Activated CD8-positive, alpha-beta T cell treated with anti-CD3 and anti-CD28 coated beads for 36 hours (primary cell): ENCODE measurements at regions of chr6 and their contacts with region 1.

Region 1: GRCh38 chr6:35731736-35732532 is 4.9 kb upstream of the ARMC12 start:
- DNase-seq: peak; percentile 98
- ATAC-seq: peak; percentile 60
- H3K4me3 Mint-ChIP-seq: peak overlapping the region; percentile 81
- H3K27ac Mint-ChIP-seq: peak overlapping the region; percentile 94
- H3K4me1 Mint-ChIP-seq: peaks cover 74% of the 10 kb centered on the region
- H3K27me3 Mint-ChIP-seq: no peaks in the 10 kb centered on the region
- CTCF ChIP-seq: no peak

Region 2: DNA sequence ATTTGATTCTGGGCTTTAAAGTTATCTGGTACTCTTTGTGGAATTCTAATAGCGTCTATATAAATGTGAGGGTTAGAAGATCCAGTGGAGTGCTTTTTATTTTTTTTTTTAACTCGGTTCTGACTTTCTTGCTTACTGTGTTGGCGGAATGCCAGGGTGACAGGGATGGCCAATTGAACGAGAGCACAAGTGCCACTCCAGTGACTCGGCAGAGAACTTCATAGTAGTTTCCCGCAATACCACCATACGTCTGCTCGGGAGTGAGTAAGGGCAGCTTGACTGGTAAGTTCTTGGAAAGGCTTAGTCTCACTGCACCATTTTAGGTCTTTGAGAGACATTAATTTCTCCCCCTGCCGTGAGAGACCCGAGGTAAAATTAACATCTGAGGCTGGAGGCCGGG is 169.9 kb before region 1 on chr6:
- CTCF ChIA-PET with region 1: interaction called, 272 read pairs
- POLR2A ChIA-PET with region 1: no interaction called
- intact Hi-C with region 1: no loop called
- DNase-seq: no peak
- ATAC-seq: no peak
- H3K4me3 Mint-ChIP-seq: no peak overlapping the region
- H3K27ac Mint-ChIP-seq: no peak overlapping the region
- H3K4me1 Mint-ChIP-seq: peaks cover 6% of the 10 kb centered on the region
- H3K27me3 Mint-ChIP-seq: no peaks in the 10 kb centered on the region
- CTCF ChIP-seq: no peak

Region 3: GRCh38 chr6:35601331-35602132 is 130.4 kb before region 1 on chr6:
- CTCF ChIA-PET with region 1: interaction called, 236 read pairs
- POLR2A ChIA-PET with region 1: interaction called, 5 read pairs
- intact Hi-C with region 1: no loop called
- DNase-seq: peak; percentile 76
- ATAC-seq: peak; percentile 71
- H3K4me3 Mint-ChIP-seq: peak overlapping the region; percentile 60
- H3K27ac Mint-ChIP-seq: peak overlapping the region; percentile 70
- H3K4me1 Mint-ChIP-seq: peaks cover 70% of the 10 kb centered on the region
- H3K27me3 Mint-ChIP-seq: no peaks in the 10 kb centered on the region
- CTCF ChIP-seq: no peak

Region 4: DNA sequence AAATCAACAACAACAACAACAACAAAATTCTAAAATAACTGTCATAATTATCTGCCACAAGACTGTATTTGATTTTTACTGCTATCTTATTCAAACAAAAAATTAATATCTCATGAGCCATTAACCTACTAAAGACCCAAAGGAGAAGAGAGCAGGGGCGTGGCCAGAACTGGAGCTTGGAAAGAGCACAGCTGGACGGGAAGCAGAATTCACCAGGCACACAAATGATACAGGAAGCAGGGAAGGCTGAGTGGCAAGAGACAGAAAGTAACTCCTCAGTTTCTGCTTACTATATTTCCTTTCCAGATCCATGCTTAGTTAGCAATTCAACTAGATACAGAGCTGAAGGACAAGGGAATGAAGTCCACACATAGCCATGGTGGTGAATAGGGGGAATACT is 97.6 kb before region 1 on chr6:
- CTCF ChIA-PET with region 1: interaction called, 13 read pairs
- POLR2A ChIA-PET with region 1: no interaction called
- intact Hi-C with region 1: no loop called
- DNase-seq: no peak
- ATAC-seq: no peak
- H3K4me3 Mint-ChIP-seq: no peak overlapping the region
- H3K27ac Mint-ChIP-seq: peak overlapping the region; percentile 64
- H3K4me1 Mint-ChIP-seq: peaks cover 41% of the 10 kb centered on the region
- H3K27me3 Mint-ChIP-seq: no peaks in the 10 kb centered on the region
- CTCF ChIP-seq: no peak

Region 5: GRCh38 chr6:35663447-35664235 is 68.3 kb before region 1 on chr6:
- CTCF ChIA-PET with region 1: interaction called, 36 read pairs
- POLR2A ChIA-PET with region 1: interaction called, 13 read pairs
- intact Hi-C with region 1: loop called (anchors 5 kb)
- DNase-seq: no peak
- ATAC-seq: peak; percentile 60
- H3K4me3 Mint-ChIP-seq: no peak overlapping the region
- H3K27ac Mint-ChIP-seq: no peak overlapping the region
- H3K4me1 Mint-ChIP-seq: peaks cover 16% of the 10 kb centered on the region
- H3K27me3 Mint-ChIP-seq: no peaks in the 10 kb centered on the region
- CTCF ChIP-seq: no peak

Region 6: DNA sequence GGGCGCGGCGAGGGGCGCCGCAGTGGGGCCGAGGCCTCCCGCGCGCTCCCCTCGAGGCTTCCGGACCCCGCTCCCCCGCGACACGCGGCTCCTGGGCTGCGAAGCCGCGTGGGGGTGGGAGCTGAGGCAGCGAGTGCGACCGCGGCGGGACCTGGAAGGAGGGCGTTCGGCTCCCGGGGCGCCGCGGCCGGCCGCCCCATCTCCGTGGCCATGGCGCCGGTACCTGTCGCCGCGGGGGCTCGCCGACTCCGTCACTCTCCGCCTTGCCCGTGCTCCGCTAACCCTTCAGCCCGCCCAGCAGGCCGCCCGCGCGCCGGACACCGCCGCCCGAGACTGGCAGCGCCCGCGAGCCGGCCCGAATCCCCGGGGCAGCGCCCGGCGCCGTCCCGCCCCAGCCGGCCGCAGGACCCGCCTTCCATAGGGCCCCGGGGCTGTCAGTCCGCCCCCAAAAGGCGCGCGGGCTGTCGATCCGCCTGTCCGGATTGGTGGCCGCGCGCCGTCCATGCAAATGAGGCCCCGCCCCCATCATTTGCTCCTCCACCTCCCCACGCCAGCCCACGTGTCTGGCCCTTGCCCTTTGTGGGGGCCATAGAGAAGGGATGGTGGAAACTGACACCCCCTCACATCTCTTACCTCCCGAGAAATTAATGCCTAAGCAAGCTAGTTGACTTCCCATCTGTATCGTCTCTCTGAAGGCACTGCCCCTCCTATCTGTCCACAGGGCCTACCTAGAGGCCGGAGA is 43.2 kb before region 1 on chr6 and contains the start of gene FKBP5:
- CTCF ChIA-PET with region 1: interaction called, 23 read pairs
- POLR2A ChIA-PET with region 1: interaction called, 30 read pairs
- intact Hi-C with region 1: loop called (anchors 2 kb)
- DNase-seq: peak; percentile 95
- ATAC-seq: peak; percentile 94
- H3K4me3 Mint-ChIP-seq: peak within 1 kb of the TSS; percentile 91
- H3K27ac Mint-ChIP-seq: peak within 1 kb of the TSS; percentile 91
- H3K4me1 Mint-ChIP-seq: peaks cover 9% of the 10 kb centered on the region
- H3K27me3 Mint-ChIP-seq: no peaks in the 10 kb centered on the region
- CTCF ChIP-seq: no peak
- total RNA-seq, gene FKBP5: 90.6 to 93.4 TPM